CD14-positive monocyte (primary cell): ENCODE measurements at regions of chr6 and their contacts with region 1.

Region 1: DNA sequence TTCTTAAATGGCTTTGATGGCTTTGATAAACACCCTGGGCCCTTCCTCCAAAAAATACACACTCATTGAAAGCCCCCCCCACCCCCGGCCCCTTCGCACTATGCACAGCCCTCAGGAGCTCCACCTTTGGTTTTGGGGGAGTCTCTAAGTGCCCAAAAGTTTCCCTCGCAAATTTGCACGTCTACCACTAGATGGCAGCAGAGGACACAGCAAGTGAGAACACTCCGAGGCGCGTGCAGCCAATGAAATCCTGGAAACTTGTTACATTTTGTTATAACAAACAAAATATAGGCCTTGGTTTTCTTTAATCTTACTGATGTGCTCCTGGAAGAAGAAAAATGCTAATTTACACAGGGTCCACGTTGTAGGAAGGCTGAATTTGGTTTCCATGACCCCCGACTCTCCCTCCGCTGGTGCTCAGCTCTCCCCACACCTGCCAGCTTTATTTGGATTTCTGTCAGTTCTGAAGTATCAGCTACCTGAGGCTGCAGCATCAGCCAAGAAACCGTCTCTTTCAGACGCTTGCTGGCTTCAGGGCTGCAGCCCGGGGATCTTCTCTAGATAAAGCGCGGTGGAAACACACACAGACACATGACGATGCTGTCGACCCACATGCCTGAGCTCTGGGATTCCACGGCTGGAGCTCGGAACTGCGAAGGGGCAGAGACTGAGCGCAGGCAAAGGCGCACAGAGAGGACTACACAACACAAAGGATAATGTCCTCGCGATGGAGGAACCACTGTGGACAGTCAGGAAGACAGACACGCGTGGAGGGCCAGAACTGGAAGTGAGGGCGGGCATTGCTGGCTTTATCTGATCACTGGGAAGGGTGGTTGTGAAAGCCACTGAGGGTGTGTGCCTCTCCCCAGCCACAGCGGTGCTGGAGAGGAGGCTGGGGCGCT is 148.4 kb upstream of the RPS6KA2 start:
- DNase-seq: peak; percentile 50 to 66 (median 54)
- H3K4me3 ChIP-seq: no peak overlapping the region
- H3K4me3 Mint-ChIP-seq: peak overlapping the region; percentile 10 to 18
- H3K27ac ChIP-seq: no peak overlapping the region
- H3K27ac Mint-ChIP-seq: peak overlapping the region in 1 of 7 donors; percentile 66
- H3K4me1 ChIP-seq: peaks cover 0 to 3% of the 10 kb centered on the region in 2 donors
- H3K4me1 Mint-ChIP-seq: peaks cover 12% of the 10 kb centered on the region
- H3K27me3 ChIP-seq: no peaks in the 10 kb centered on the region
- H3K27me3 Mint-ChIP-seq: peaks cover 2 to 9% (median 6%) of the 10 kb centered on the region in 3 donors
- CTCF ChIP-seq: peak; percentile 86

Region 2: DNA sequence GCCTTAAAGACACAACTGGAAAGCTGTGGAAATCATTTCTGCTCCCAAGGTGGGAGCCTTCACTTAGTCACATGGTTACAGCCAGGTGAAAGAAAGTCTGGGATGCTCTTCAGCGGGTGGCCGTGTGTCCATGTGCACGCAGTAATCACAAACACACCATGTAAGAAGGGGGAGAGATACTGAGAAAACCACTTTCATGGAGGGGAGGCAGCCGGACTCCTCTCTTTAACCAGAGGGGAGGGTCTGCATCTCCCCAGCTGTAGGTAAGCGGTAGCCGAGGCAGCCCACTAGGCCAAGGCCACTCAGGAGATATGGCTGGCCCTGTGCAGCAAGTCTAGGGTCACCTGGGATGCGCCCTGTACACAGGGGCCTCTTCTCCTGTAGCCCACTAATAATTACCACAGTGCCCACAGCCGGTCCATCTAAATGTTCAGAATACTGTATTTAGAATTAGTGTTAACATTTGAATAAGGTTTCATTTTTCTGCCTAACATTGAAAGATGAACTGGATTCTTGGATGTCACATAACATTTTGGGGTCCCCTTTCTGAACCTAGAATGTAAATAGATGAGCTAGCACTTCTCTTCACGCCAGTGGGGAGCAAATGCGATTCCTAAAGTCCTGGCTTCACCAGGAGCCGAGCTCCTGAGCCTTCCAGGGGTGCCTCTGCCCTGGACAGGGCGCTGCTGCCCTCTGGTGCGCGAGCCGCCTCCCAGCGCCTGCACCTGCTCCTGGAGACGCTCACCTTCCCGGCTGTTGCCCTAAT is 366.4 kb after region 1 on chr6:
- intact Hi-C with region 1: loop called (anchors 5 kb)
- DNase-seq: peak in 2 of 3 donors; percentile 52 to 55
- H3K4me3 ChIP-seq: no peak overlapping the region
- H3K4me3 Mint-ChIP-seq: peak overlapping the region in 1 of 2 donors; percentile 3
- H3K27ac ChIP-seq: no peak overlapping the region
- H3K27ac Mint-ChIP-seq: peak overlapping the region in 3 of 7 donors; percentile 7 to 52 (median 25)
- H3K4me1 ChIP-seq: peaks cover 0 to 11% of the 10 kb centered on the region in 2 donors
- H3K4me1 Mint-ChIP-seq: peaks cover 18% of the 10 kb centered on the region
- H3K27me3 ChIP-seq: no peaks in the 10 kb centered on the region
- H3K27me3 Mint-ChIP-seq: peaks cover 3 to 4% (median 3%) of the 10 kb centered on the region in 3 donors
- CTCF ChIP-seq: peak; percentile 86

Region 3: DNA sequence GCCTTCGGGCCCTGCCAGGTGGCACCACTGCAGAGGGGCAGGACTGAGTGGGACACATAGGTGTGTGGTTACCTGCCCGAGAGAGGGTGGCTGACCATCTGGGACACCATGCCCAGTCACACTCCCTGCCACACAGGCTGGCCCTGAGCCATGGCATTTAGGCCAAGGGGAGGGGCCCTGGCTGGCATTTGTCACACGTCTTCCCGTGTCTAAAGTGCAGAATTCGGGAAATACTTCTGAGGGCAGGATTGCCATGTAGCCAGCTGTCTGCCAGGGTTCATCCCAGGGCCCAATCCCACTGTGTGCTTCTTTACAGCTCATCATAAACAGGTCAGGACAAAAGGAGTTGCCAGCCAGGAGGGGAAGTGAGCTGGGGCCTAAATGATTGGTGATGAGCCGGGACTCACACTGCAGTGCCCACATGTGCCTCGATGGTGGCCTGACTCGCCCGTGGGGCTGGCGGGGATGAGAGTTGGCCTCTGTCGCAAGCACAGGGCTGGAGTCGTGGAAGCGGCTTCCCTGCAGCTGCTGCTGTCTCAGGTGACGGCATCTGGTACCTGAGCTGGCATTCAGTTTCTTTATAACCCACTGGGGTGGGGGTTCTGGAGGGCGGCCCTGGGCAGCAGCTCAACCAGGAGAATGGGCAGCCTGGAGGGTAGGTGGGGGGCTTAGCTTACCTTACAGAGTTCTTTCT is 509.8 kb after region 1 on chr6:
- intact Hi-C with region 1: loop called (anchors 10 kb)
- DNase-seq: no peak
- H3K4me3 ChIP-seq: no peak overlapping the region
- H3K4me3 Mint-ChIP-seq: no peak overlapping the region
- H3K27ac ChIP-seq: no peak overlapping the region
- H3K27ac Mint-ChIP-seq: no peak overlapping the region
- H3K4me1 ChIP-seq: no peaks in the 10 kb centered on the region
- H3K4me1 Mint-ChIP-seq: no peaks in the 10 kb centered on the region
- H3K27me3 ChIP-seq: no peaks in the 10 kb centered on the region
- H3K27me3 Mint-ChIP-seq: peaks cover 2 to 10% (median 4%) of the 10 kb centered on the region in 3 donors
- CTCF ChIP-seq: no peak

Region 4: DNA sequence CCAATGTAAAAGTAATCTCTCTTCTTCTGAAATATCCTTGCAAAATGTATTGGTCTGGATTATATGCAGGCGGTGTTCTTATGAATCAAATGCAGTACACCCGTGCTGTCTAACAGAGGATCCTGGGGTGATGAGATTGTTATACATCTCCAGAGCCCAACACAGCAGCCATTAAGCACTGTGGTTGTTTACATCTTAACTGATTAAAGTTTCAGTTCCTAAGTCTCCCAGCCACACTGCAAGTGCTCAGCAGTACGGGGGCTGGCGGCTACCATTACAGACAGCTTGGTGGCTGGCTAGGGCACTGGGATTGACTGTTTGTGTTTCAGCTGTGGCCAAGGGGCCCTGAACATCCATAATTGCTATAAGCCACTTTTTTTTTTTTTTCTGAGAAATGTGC is 522.7 kb after region 1 on chr6:
- intact Hi-C with region 1: loop called in 1 of 2 experiments (anchors 10 kb)
- DNase-seq: no peak
- H3K4me3 ChIP-seq: no peak overlapping the region
- H3K4me3 Mint-ChIP-seq: peak overlapping the region in 1 of 2 donors; percentile 59
- H3K27ac ChIP-seq: no peak overlapping the region
- H3K27ac Mint-ChIP-seq: no peak overlapping the region
- H3K4me1 ChIP-seq: peaks cover 0 to 5% of the 10 kb centered on the region in 2 donors
- H3K4me1 Mint-ChIP-seq: peaks cover 4% of the 10 kb centered on the region
- H3K27me3 ChIP-seq: no peaks in the 10 kb centered on the region
- H3K27me3 Mint-ChIP-seq: peaks cover 0 to 10% (median 2%) of the 10 kb centered on the region in 3 donors
- CTCF ChIP-seq: no peak